PC-3 (cell line): ENCODE measurements at regions of chr7 and their contacts with region 1.

Region 1: DNA sequence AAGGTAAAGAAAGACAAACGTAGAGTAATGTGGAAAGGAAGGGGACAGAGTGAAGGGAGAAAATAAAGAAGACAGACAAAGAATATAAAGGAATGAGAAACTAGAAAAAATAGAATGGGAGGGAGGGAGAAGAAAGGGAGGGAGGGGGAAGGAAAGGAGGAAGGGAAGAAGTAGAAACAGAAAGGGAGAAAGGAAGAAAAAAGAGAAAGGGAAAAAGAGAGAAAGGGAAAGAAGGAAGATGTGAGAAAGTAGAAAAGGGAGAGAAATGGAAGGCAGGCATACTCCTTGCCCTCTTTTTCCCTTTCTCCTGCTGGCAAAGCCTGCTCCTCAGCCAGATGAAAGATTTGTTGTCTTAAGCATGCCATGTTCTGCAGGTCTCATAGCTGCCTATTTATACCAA is 1137.8 kb upstream of the C7orf33 start:
- DNase-seq: no peak
- ATAC-seq: no peak
- H3K4me3 ChIP-seq: no peak overlapping the region
- H3K27ac ChIP-seq: no peak overlapping the region
- H3K4me1 ChIP-seq: no peaks in the 10 kb centered on the region
- H3K27me3 ChIP-seq: no peaks in the 10 kb centered on the region
- CTCF ChIP-seq: no peak

Region 2: DNA sequence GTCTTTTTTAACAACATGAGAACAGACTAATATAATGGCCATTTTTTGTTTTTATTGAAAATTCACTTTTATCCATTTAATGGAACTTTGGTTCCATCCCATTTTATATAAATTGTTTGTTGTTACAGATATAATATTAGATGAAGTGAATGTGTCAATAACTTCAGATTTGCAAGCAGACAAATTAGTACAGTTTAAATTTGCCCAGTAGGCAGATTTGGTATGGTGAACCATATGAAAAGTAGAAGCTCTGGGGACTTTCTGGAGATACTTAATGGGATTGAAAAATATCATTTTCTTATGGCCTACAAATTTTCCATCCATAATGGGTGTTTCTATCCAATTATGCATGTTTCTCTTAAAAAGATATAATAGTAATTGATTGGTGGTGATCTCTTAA is 58.5 kb before region 1 on chr7:
- CTCF ChIA-PET with region 1: interaction called, 10 read pairs
- POLR2A ChIA-PET with region 1: no interaction called
- intact Hi-C with region 1: no loop called
- DNase-seq: no peak
- ATAC-seq: no peak
- H3K4me3 ChIP-seq: no peak overlapping the region
- H3K27ac ChIP-seq: no peak overlapping the region
- H3K4me1 ChIP-seq: no peaks in the 10 kb centered on the region
- H3K27me3 ChIP-seq: no peaks in the 10 kb centered on the region
- CTCF ChIP-seq: no peak